ENCODE measurements at regions of chr12 and their contacts with region 1.

Region 1: DNA sequence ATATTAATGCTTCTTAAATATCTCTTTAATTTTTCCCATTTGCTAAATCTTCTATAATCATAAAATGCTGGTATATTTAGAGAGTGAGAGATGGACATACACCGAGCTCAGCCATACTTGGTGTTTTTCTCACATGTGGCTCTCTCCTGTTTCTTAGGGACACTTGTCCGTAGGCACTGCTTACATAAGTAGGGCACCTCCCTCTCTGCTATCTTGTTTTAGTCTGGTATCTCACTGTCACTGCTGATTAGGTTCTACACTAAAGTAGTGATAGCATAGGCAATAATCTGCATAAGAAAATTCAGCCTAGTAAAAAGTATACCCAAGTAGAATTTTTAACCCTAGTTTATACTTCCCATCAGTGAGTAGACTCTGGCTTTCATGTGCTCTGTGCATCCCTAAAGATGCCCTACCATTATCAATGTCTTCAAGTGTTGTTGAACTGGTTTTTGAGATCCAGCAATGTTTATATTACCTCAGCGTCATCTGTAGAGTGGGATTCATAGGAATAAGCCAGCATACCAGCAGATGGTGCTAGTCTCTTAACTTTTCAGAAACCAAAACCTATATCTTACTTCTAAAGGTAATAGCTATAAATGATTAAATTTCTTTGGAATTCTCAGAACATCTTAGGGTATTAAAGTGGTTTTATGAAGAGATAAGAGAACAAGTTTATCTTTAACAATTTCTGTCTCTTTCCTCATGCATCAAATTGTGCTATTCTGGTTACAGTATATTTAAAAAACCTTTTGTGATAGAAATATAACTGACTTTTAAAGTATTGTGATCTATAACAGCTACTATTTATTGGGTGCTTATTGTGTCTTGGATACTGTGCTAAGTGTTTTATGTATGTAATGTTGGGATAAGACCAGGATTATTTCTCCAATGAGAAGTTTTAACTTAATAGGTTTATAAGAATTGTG is 32.9 kb downstream of the ARID2 start:
- DNase-seq: no peak
- ATAC-seq: peak; percentile 78
- H3K4me3 ChIP-seq: no peak overlapping the region
- H3K27ac ChIP-seq: no peak overlapping the region
- H3K4me1 ChIP-seq: no peaks in the 10 kb centered on the region
- H3K27me3 ChIP-seq: no peaks in the 10 kb centered on the region
- CTCF ChIP-seq: peak; percentile 50 to 62 (median 57)
- EP300 ChIP-seq: no peak
- POLR2A ChIP-seq: no peak
- RAD21 ChIP-seq: peak; percentile 58

Region 2: GRCh38 chr12:45703942-45704341 is 58.5 kb before region 1 on chr12:
- CTCF ChIA-PET with region 1: no interaction called
- POLR2A ChIA-PET with region 1: no interaction called
- RAD21 ChIA-PET with region 1: no interaction called
- SMC1A ChIA-PET with region 1: no interaction called
- in situ Hi-C with region 1: no loop called
- intact Hi-C with region 1: no loop called
- DNase-seq: no peak
- ATAC-seq: no peak
- H3K4me3 ChIP-seq: no peak overlapping the region
- H3K27ac ChIP-seq: no peak overlapping the region
- H3K4me1 ChIP-seq: no peaks in the 10 kb centered on the region
- H3K27me3 ChIP-seq: no peaks in the 10 kb centered on the region
- CTCF ChIP-seq: no peak
- EP300 ChIP-seq: no peak
- POLR2A ChIP-seq: no peak
- RAD21 ChIP-seq: no peak

Region 3: GRCh38 chr12:45775964-45776363 is 13.5 kb after region 1 on chr12:
- CTCF ChIA-PET with region 1: interaction called, 16 read pairs
- POLR2A ChIA-PET with region 1: no interaction called
- RAD21 ChIA-PET with region 1: interaction called, 3 read pairs
- SMC1A ChIA-PET with region 1: interaction called, 3 read pairs
- in situ Hi-C with region 1: no loop called
- intact Hi-C with region 1: no loop called
- DNase-seq: no peak
- ATAC-seq: peak; percentile 60
- H3K4me3 ChIP-seq: no peak overlapping the region
- H3K27ac ChIP-seq: no peak overlapping the region
- H3K4me1 ChIP-seq: no peaks in the 10 kb centered on the region
- H3K27me3 ChIP-seq: no peaks in the 10 kb centered on the region
- CTCF ChIP-seq: no peak
- EP300 ChIP-seq: no peak
- POLR2A ChIP-seq: no peak
- RAD21 ChIP-seq: no peak

Measured in GM12878 (cell line).